ENCODE measurements at regions of chr12 and their contacts with region 1.

Region 1: DNA sequence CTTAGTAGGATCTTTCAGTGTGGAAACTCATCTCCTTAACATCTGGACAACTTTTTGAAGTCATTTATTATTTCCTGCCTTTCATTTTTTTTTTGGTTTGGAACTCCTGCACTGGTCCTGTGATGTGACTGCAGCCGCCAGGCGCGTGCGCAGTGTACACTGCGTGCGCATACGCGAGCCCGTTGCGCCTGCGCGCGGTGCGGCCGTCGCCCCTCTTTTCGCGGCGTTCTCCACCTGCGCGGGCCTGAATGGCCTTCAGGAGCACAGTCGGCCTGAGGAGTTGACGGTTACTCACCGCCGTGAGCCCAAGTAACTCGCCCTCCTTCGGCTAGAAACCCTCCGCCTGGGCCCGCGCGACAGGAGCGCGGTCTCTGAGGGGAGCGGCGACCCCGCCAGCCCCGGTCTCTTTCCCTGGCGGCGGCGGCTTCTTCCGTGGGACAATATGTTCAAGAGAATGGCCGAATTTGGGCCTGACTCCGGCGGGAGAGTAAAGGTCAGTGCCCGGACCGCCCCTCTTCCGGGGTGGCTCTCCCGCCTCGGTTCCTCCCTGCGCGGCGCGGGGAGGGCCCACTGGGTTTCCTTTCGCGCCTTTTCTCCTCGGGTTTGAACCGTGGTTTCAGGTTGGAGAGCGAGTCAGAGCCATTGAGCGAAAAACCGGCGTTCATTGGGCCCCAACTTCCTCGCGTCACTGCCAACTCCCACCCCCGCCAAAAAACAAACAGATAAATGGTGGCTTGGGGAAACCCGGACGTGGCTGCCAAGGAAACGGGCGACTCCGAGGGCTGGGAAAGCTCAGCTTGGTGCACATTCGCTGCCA is at the start of gene YEATS4:
- DNase-seq: peak; percentile 96
- H3K4me3 Mint-ChIP-seq: peak within 1 kb of the TSS; percentile 93
- H3K27ac Mint-ChIP-seq: peak within 1 kb of the TSS; percentile 98
- H3K4me1 Mint-ChIP-seq: peaks cover 27% of the 10 kb centered on the region
- H3K27me3 Mint-ChIP-seq: peaks cover 7% of the 10 kb centered on the region
- total RNA-seq, gene YEATS4: 37.9 and 41.8 TPM in 2 replicates

Region 2: DNA sequence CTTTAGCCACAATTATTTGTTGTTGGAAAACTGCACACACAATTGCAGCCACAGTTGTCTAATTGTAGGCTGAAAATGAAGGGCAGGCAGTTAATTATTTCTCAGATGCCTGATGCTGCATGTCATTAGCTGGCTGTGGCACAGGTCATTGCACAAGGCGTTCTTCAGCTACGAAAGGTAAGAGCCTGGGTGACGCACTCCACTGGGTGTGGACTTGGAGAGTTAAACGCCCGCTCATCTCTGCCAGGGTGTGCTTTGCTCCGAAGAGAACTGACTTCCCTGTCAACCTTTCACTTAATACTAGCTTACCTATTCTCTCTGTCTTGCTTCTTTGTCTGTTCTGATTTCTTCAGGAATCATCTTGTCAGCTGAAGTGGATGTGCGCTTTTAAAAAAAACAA is 335.3 kb before region 1 on chr12:
- intact Hi-C with region 1: no loop called
- DNase-seq: no peak
- H3K4me3 Mint-ChIP-seq: no peak overlapping the region
- H3K27ac Mint-ChIP-seq: no peak overlapping the region
- H3K4me1 Mint-ChIP-seq: no peaks in the 10 kb centered on the region
- H3K27me3 Mint-ChIP-seq: no peaks in the 10 kb centered on the region

Region 3: GRCh38 chr12:69157023-69157655 is 202.6 kb before region 1 on chr12:
- intact Hi-C with region 1: loop called (anchors 1 kb)
- DNase-seq: peak; percentile 98
- H3K4me3 Mint-ChIP-seq: peak overlapping the region; percentile 48
- H3K27ac Mint-ChIP-seq: peak overlapping the region; percentile 72
- H3K4me1 Mint-ChIP-seq: peaks cover 37% of the 10 kb centered on the region
- H3K27me3 Mint-ChIP-seq: no peaks in the 10 kb centered on the region

Region 4: GRCh38 chr12:69290545-69291277 is 69.0 kb before region 1 on chr12:
- intact Hi-C with region 1: loop called (anchors 2 kb)
- DNase-seq: peak; percentile 91
- H3K4me3 Mint-ChIP-seq: no peak overlapping the region
- H3K27ac Mint-ChIP-seq: no peak overlapping the region
- H3K4me1 Mint-ChIP-seq: peaks cover 1% of the 10 kb centered on the region
- H3K27me3 Mint-ChIP-seq: peaks cover 45% of the 10 kb centered on the region

Region 5: DNA sequence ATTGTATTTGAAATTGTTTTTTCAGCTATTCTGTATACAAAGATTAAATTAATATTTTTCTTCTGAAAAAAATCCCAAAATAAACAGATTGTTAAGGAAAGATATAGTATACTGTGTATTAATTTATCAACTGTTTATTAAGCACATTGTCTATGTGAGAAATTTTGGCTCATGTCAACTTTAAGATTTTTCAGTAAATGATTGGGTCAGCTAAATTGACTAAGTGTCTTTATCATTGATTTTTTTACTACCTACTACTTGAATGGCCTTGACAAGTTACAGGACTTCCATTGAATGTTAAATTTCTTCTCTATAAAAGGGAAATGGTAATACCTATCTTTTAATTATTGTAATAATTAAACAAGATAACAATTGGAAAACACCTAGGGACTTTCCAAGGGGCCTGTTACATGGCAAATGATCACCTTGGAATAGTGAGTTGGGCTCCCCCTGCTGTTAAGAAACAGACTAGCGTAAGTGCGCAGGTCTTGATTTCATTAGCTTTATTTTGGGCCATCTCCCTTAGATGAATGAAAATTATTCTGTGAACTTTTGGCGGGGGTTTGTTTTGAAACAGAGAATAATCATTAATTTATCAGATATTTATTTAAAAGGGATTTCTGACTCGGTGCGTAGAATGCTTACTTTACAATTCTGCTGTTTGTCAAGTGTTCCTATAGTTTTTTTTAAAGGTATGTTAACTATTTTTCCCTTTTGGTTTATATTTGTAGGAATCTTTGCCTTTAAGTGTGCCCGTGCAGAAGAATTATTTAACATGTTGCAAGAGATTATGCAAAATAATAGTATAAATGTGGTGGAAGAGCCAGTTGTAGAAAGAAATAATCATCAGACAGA is 211.0 kb after region 1 on chr12:
- intact Hi-C with region 1: loop called (anchors 1 kb)
- DNase-seq: peak; percentile 86
- H3K4me3 Mint-ChIP-seq: no peak overlapping the region
- H3K27ac Mint-ChIP-seq: no peak overlapping the region
- H3K4me1 Mint-ChIP-seq: peaks cover 12% of the 10 kb centered on the region
- H3K27me3 Mint-ChIP-seq: no peaks in the 10 kb centered on the region

Region 6: DNA sequence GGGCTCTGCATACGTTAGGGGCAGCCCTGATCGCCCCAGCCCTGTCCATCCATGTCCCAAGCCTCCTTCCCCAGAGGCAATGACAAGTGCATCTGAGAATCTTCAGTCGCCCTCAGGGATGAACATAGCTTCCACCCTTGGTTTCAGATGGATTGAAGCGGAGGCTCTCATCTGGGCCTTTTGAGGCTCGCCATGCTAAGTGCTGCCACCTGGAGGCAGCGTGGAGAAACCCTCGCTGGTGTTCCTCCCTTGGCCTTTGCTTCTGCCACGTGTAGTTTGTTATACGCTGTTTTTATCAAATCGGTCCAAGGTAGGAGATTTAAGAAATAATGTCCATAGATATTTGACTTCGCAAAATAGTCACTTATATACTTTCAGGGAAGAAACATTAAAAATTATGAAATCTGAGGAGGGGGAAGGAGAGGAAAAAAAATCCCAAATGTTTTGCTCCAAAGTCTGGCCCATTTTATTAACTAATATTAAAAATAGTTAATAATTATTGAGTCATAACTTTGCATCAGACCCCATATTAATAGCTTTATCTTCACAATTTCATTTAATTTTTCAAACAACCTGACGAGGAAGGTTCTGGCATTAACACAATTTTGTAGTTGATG is 279.8 kb after region 1 on chr12:
- intact Hi-C with region 1: loop called (anchors 1 kb)
- DNase-seq: peak; percentile 88
- H3K4me3 Mint-ChIP-seq: no peak overlapping the region
- H3K27ac Mint-ChIP-seq: no peak overlapping the region
- H3K4me1 Mint-ChIP-seq: peaks cover 2% of the 10 kb centered on the region
- H3K27me3 Mint-ChIP-seq: peaks cover 2% of the 10 kb centered on the region